ENCODE measurements at regions of chr3 and their contacts with region 1.

Region 1: DNA sequence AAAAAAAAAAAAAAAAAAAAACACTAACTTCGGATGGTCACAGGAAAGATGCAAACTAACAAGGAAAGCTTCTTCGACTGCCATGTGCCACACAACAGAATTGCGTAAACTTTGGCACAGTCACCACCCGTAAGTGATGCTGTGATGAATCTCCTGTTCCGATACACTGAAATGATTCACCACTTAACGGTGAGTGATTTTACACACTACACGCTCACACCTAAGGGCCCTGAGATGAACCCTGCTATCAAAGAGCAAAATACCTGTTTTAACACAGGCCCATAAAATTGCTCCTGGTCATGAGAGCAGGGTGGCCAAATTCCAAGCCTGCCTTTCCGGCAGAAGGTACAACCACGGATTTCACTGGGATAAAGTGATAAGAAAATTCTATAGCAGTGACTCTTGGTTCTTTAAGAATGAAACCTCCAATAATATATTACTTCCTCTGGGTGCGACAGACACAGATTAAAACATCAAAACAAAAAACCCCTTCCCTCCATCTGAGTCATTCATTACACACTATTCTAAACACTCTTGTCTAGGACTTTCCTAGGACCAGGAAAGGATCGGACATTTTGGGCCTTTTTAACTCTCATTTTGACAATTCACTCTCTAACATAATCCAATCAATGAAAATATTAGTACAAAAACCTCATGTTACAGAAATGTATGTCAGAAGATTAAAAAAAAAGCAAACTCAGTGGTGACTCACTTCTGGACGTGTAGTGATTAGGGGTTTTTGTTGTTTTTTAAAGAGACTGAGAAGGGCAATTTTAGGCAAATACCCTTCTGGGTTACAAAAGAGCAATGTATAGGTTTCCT is 28.3 kb downstream of the LRIG1 start:
- DNase-seq: peak; percentile 53
- CTCF ChIP-seq: no peak

Region 2: GRCh38 chr3:66053550-66054094 is 418.9 kb before region 1 on chr3:
- CTCF ChIA-PET with region 1: no interaction called
- POLR2A ChIA-PET with region 1: no interaction called
- DNase-seq: no peak
- CTCF ChIP-seq: no peak

Region 3: GRCh38 chr3:66483406-66483906 is 10.9 kb after region 1 on chr3:
- CTCF ChIA-PET with region 1: interaction called, 15 read pairs
- POLR2A ChIA-PET with region 1: interaction called, 3 read pairs
- DNase-seq: peak; percentile 30
- CTCF ChIP-seq: no peak

Region 4: DNA sequence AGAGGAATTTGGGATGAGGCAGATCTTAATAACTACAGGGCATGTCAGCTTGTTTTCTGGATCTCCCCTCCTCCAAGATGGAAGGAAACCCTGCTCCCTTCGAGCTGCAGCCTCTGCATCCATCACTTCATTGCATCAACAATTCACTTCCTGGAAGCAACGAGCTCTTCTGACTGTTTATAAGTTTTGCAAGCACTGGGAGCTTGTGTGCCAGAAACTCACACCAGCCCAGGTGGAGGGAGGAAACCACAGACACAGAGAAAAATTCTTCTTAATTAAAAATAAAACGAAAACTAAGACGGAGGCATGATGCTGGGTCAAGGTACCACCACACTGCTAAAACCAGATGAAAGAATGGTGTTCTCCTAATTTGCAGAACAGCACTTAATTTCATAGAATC is 17.7 kb after region 1 on chr3:
- CTCF ChIA-PET with region 1: interaction called, 15 read pairs
- POLR2A ChIA-PET with region 1: no interaction called
- DNase-seq: no peak
- CTCF ChIP-seq: no peak

Measured in GM10248 (cell line).